ENCODE measurements at regions of chr12 and their contacts with region 1.

Region 1: GRCh38 chr12:80763874-80764273 is 47.2 kb downstream of the MYF5 start:
- DNase-seq: no peak
- H3K4me3 ChIP-seq: no peak overlapping the region
- CTCF ChIP-seq: peak; percentile 22

Region 2: GRCh38 chr12:80313209-80313608 is 450.7 kb before region 1 on chr12:
- CTCF ChIA-PET with region 1: interaction called, 12 read pairs
- POLR2A ChIA-PET with region 1: no interaction called
- DNase-seq: no peak
- H3K4me3 ChIP-seq: no peak overlapping the region
- CTCF ChIP-seq: no peak

Region 3: GRCh38 chr12:80472902-80473500 is 290.9 kb before region 1 on chr12:
- CTCF ChIA-PET with region 1: interaction called, 34 read pairs
- POLR2A ChIA-PET with region 1: no interaction called
- DNase-seq: peak; percentile 40
- H3K4me3 ChIP-seq: no peak overlapping the region
- CTCF ChIP-seq: peak; percentile 35

Region 4: GRCh38 chr12:80632835-80633234 is 131.0 kb before region 1 on chr12:
- CTCF ChIA-PET with region 1: no interaction called
- POLR2A ChIA-PET with region 1: no interaction called
- DNase-seq: no peak
- H3K4me3 ChIP-seq: no peak overlapping the region
- CTCF ChIP-seq: no peak

Region 5: GRCh38 chr12:80861623-80862378 is 97.9 kb after region 1 on chr12:
- CTCF ChIA-PET with region 1: no interaction called
- POLR2A ChIA-PET with region 1: no interaction called
- DNase-seq: no peak
- H3K4me3 ChIP-seq: no peak overlapping the region
- CTCF ChIP-seq: no peak

Region 6: GRCh38 chr12:80939231-80939952 is 175.5 kb after region 1 on chr12:
- CTCF ChIA-PET with region 1: no interaction called
- POLR2A ChIA-PET with region 1: no interaction called
- DNase-seq: no peak
- H3K4me3 ChIP-seq: no peak overlapping the region
- CTCF ChIP-seq: no peak